ENCODE measurements at regions of chr7 and their contacts with region 1.

Region 1: DNA sequence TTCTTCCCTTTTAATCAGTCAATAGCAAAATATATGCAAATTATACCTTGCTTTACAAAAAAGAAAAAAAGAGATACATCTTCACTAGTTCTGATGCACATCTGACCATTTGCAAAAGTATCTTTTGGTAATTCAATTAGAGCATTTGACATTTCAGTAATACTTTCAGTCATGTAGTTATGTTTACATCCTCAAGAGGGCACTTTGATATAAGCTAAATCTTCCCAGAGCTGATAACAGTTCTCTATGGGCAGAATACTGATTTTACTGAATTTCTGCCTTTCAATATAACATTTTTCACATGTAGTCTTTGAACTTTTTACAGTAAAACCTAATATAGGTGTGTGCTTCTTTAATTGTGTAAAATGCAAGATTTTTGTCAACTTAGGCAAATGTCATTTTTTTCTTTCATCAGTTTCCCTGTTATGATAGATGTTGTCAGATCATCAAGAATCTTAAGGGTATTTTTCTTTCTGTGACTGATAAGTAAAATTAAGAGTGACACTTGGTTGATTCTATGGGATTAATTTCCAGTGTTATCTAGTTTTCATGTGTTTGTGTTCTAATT is 703.5 kb upstream of the SEMA3D start:
- DNase-seq: no peak
- ATAC-seq: no peak
- H3K4me3 Mint-ChIP-seq: no peak overlapping the region
- H3K27ac Mint-ChIP-seq: no peak overlapping the region
- H3K4me1 Mint-ChIP-seq: no peaks in the 10 kb centered on the region
- H3K27me3 Mint-ChIP-seq: no peaks in the 10 kb centered on the region
- CTCF ChIP-seq: no peak

Region 2: DNA sequence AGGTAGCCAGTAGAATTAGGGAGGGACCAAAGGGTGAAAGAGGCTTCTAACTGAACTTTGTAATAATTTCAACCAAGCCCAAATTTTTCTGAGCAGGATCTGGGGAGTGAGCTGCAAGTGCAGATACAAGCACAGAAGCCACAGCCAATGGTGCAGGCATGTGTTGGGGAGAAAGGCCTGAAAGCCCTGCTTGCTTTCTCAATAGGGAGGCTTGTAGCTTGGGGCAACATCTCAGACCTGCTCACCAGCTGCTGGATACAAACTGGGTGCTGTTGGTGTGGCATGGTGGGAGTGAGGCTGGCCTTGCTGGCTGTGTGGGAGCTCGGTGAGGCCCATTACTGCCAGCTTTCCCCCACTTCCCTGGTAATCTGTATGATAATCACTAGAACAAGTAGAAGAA is 14.9 kb before region 1 on chr7:
- CTCF ChIA-PET with region 1: no interaction called
- POLR2A ChIA-PET with region 1: no interaction called
- intact Hi-C with region 1: no loop called
- DNase-seq: no peak
- ATAC-seq: no peak
- H3K4me3 Mint-ChIP-seq: no peak overlapping the region
- H3K27ac Mint-ChIP-seq: no peak overlapping the region
- H3K4me1 Mint-ChIP-seq: no peaks in the 10 kb centered on the region
- H3K27me3 Mint-ChIP-seq: no peaks in the 10 kb centered on the region
- CTCF ChIP-seq: no peak

Region 3: DNA sequence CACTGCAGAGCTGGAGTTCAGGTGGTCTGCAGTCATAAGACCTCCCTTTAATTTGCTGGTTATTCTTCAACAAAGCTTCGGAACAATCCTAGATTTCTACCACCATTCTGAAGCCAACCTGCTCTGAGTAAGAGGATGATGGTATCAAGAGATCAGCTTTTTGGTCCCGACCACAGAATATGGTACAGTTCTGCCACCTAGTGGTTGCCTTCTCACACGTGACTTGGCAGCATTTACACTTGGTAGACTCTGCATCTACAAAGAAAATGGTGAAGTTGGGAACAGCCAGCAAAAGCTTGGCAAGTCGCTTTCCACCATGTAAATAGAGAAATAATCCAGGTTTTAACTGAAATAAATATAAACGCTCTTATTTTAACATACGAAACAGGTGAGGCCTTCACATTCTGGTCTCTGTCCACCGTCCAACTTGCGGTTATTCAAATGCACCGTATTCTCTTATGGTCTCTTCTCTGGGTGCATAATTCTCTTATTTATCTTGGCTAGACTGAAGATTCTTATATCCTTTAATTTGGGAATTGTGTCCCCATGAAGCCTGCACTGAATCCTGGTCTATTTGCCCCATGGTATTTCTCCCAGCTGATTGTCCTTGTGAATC is 579.5 kb after region 1 on chr7:
- CTCF ChIA-PET with region 1: no interaction called
- POLR2A ChIA-PET with region 1: no interaction called
- intact Hi-C with region 1: loop called (anchors 2 kb)
- DNase-seq: no peak
- ATAC-seq: peak; percentile 42
- H3K4me3 Mint-ChIP-seq: no peak overlapping the region
- H3K27ac Mint-ChIP-seq: no peak overlapping the region
- H3K4me1 Mint-ChIP-seq: no peaks in the 10 kb centered on the region
- H3K27me3 Mint-ChIP-seq: no peaks in the 10 kb centered on the region
- CTCF ChIP-seq: no peak

Measured in activated B cell treated with CpG ODN at 0.5 μM for 24 hours (primary cell).